Transverse colon (tissue), 4 donors: ENCODE measurements at regions of chr16 and their contacts with region 1.

Region 1: GRCh38 chr16:72927199-72928089 is 120.5 kb downstream of the ZFHX3 start:
- DNase-seq: peak; percentile 20
- H3K4me3 ChIP-seq: no peak overlapping the region
- H3K27ac ChIP-seq: no peak overlapping the region
- H3K4me1 ChIP-seq: peaks cover 0 to 16% (median 10%) of the 10 kb centered on the region in 4 donors
- H3K27me3 ChIP-seq: no peaks in the 10 kb centered on the region
- CTCF ChIP-seq: no peak
- EP300 ChIP-seq: no peak
- POLR2A ChIP-seq: no peak

Region 2: GRCh38 chr16:72947379-72948237 is 20.2 kb after region 1 on chr16:
- in situ Hi-C with region 1: no loop called
- intact Hi-C with region 1: loop called (anchors 1 kb)
- DNase-seq: no peak
- H3K4me3 ChIP-seq: no peak overlapping the region
- H3K27ac ChIP-seq: peak overlapping the region; percentile 31 to 55 (median 42)
- H3K4me1 ChIP-seq: peaks cover 9 to 17% (median 12%) of the 10 kb centered on the region in 4 donors
- H3K27me3 ChIP-seq: no peaks in the 10 kb centered on the region
- CTCF ChIP-seq: no peak
- EP300 ChIP-seq: no peak
- POLR2A ChIP-seq: no peak

Region 3: DNA sequence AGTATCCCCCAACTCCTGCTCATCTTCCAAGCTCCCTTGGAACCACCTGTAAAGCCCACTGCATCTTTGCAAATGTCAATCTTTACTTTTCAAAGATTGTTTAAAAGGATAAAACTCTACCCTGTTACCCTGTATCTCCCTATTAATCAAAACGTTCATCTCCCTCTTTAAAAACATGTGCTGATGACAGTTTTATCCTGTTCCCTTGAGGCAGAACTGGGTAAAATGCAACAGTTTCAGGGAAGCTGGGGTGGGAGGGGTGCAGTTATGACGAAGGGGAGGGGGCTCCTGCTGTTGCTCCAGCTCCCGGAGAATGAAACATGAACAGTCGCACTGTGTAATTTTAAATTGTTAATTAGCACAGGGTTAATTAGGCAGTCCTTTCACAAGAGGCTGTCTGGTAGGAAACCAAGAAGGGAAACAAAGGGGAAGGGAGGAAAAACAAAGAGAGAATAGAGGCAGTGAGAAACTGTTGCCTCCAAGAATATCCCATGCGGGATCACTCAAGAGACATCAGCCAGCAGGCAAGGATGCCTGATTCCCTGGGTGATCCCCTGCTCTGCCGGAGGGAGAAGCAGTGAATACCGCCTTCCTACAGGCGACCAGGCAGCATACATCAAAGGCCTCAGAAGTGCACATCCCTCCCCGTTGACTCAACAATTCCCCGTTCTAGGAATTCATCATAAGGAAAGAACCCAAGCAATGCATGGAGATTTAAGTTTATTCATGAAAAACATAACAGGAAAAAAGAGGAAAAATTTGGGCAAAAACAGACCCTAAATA is 36.3 kb after region 1 on chr16:
- in situ Hi-C with region 1: no loop called
- intact Hi-C with region 1: loop called (anchors 1 kb)
- DNase-seq: no peak
- H3K4me3 ChIP-seq: no peak overlapping the region
- H3K27ac ChIP-seq: no peak overlapping the region
- H3K4me1 ChIP-seq: peaks cover 0 to 7% (median 5%) of the 10 kb centered on the region in 4 donors
- H3K27me3 ChIP-seq: no peaks in the 10 kb centered on the region
- CTCF ChIP-seq: no peak
- EP300 ChIP-seq: no peak
- POLR2A ChIP-seq: no peak

Region 4: GRCh38 chr16:72985148-72985941 is 57.9 kb after region 1 on chr16:
- in situ Hi-C with region 1: no loop called
- intact Hi-C with region 1: no loop called
- DNase-seq: no peak
- H3K4me3 ChIP-seq: no peak overlapping the region
- H3K27ac ChIP-seq: peak overlapping the region; percentile 48 to 80 (median 72)
- H3K4me1 ChIP-seq: peaks cover 16 to 38% (median 29%) of the 10 kb centered on the region in 4 donors
- H3K27me3 ChIP-seq: no peaks in the 10 kb centered on the region
- CTCF ChIP-seq: no peak
- EP300 ChIP-seq: peak; percentile 21
- POLR2A ChIP-seq: no peak

Region 5: DNA sequence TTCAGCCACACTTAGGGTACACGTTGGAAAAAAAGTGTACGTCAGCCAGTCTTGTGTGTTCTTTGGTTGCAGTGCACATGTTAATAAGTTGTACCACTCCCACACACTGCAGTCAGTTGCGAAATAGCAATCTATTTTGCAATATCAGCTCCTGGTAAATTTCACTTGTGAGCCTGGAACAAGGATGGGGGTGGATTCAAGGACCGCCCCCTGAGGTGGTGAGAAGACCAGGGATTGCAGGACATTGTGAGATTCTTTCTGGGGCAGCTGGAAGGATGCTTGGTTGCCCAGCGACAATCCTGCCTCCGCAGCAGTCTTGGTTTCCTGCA is 199.0 kb after region 1 on chr16:
- in situ Hi-C with region 1: no loop called
- intact Hi-C with region 1: no loop called
- DNase-seq: no peak
- H3K4me3 ChIP-seq: no peak overlapping the region
- H3K27ac ChIP-seq: peak overlapping the region in 1 of 4 donors; percentile 28
- H3K4me1 ChIP-seq: no peaks in the 10 kb centered on the region
- H3K27me3 ChIP-seq: no peaks in the 10 kb centered on the region
- CTCF ChIP-seq: no peak
- EP300 ChIP-seq: no peak
- POLR2A ChIP-seq: no peak